ENCODE measurements at regions of chr19 and their contacts with region 1.

Region 1: GRCh38 chr19:42254989-42255765 is at the start of gene ERF:
- DNase-seq: peak; percentile 96 to 98
- ATAC-seq: peak; percentile 92
- H3K4me3 ChIP-seq: peak within 1 kb of the TSS; percentile 96 to 99
- H3K27ac ChIP-seq: peak within 1 kb of the TSS; percentile 97 to 100
- H3K4me1 ChIP-seq: no peaks in the 10 kb centered on the region
- H3K27me3 ChIP-seq: peaks cover 0 to 2% of the 10 kb centered on the region in 2 donors
- total RNA-seq, gene ERF: 74.9 to 99.5 TPM

Region 2: DNA sequence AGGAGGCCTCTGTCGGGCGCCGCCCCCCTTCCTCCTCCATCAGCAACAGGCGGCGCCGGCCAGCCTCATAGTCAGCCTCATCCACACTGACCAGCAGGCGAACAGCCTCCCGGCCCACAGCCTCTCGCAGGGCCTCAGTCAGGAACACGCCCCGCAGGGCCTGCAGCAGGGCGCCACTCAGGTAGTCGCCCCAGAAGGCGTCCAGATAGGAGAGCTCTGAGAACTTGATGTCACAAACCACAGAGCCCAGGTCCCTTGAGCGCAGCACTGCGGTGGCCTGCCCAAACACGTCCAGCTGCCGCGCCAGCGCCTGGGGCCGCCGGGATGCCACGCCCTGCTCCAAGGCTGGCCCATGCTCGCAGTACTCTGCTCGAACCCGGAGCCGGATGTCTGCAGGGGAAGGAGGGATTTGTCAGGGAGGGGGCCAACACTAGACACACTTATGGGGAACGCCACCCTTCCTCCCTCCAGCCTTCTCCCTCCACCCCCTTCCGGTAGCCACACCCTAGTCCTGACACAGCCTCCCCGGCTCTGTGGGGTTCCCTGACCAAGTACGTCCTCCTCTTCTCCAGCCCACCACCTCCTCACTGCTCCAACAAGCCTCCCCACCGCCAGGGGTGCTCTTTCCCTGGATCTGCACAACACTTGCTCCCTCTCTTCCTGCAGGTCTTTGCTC is 55.6 kb before region 1 on chr19:
- intact Hi-C with region 1: no loop called
- DNase-seq: peak; percentile 73 to 76
- ATAC-seq: peak; percentile 37
- H3K4me3 ChIP-seq: no peak overlapping the region
- H3K27ac ChIP-seq: no peak overlapping the region
- H3K4me1 ChIP-seq: no peaks in the 10 kb centered on the region
- H3K27me3 ChIP-seq: no peaks in the 10 kb centered on the region

Region 3: GRCh38 chr19:42268704-42269477 is 13.7 kb after region 1 on chr19 and contains the start of gene CIC:
- intact Hi-C with region 1: loop called in 1 of 2 experiments (anchors 2 kb)
- DNase-seq: peak; percentile 99 to 100
- ATAC-seq: peak; percentile 95
- H3K4me3 ChIP-seq: peak within 1 kb of the TSS; percentile 50 to 76
- H3K27ac ChIP-seq: peak within 1 kb of the TSS; percentile 73 to 97
- H3K4me1 ChIP-seq: peaks cover 0 to 1% of the 10 kb centered on the region in 2 donors
- H3K27me3 ChIP-seq: no peaks in the 10 kb centered on the region
- total RNA-seq, gene CIC: 103 to 104 TPM

Region 4: GRCh38 chr19:42283143-42284065 is 28.2 kb after region 1 on chr19:
- intact Hi-C with region 1: loop called in 1 of 2 experiments (anchors 2 kb)
- DNase-seq: peak; percentile 97 to 98
- ATAC-seq: peak; percentile 74
- H3K4me3 ChIP-seq: peak overlapping the region; percentile 34 to 72
- H3K27ac ChIP-seq: peak overlapping the region; percentile 28 to 68
- H3K4me1 ChIP-seq: peaks cover 0 to 3% of the 10 kb centered on the region in 2 donors
- H3K27me3 ChIP-seq: no peaks in the 10 kb centered on the region